ENCODE measurements at regions of chr1 and their contacts with region 1.

Region 1: GRCh38 chr1:111448918-111449702 is at the starts of genes ATP5PB and WDR77:
- DNase-seq: peak; percentile 87 to 99 (median 94)

Region 2: DNA sequence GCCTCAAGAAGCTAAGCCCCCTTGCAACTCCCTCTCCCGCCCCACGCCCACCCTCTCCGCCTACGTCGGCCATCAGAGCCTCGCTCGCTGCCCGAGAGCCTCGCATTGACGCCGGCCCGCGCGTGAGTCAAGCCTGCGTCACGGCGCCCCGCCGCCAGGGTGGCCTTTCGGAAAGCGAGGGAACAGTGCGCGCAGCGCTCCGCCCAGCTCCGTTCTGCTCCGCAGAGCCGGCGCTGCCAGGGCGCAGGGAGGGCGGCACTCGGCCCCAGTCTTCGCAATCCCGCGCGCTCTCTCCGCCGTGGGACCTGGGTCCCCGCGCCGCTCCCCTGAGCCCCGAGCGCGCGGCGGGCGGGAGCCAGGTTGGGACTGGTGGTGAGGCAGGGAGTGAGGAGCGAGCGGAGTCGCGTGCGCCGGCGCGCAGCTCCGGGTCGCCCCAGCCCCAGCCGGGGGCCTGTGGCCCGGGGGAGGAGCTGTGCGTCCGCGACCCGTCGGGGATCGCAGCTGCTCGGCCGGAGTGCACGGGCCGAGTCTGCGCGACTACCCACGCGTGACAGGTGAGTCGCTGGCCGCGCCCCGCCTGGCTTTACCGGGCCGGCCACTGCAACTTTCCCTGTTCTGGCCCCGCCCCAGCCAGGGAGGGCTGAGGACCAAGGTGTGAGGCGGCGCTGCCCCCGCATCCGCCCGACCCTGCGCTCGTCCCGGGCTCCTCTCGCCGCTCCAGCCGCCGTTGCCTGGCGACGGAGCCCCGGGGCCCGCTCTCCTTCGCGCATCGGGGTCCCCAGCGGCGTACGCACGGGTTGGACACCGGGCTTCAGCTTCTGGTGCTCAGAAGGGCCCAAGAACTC is 1298.6 kb before region 1 on chr1 and contains the start of gene SLC6A17:
- intact Hi-C with region 1: no loop called
- DNase-seq: peak in 8 of 10 donors; percentile 70 to 97 (median 82)

Region 3: DNA sequence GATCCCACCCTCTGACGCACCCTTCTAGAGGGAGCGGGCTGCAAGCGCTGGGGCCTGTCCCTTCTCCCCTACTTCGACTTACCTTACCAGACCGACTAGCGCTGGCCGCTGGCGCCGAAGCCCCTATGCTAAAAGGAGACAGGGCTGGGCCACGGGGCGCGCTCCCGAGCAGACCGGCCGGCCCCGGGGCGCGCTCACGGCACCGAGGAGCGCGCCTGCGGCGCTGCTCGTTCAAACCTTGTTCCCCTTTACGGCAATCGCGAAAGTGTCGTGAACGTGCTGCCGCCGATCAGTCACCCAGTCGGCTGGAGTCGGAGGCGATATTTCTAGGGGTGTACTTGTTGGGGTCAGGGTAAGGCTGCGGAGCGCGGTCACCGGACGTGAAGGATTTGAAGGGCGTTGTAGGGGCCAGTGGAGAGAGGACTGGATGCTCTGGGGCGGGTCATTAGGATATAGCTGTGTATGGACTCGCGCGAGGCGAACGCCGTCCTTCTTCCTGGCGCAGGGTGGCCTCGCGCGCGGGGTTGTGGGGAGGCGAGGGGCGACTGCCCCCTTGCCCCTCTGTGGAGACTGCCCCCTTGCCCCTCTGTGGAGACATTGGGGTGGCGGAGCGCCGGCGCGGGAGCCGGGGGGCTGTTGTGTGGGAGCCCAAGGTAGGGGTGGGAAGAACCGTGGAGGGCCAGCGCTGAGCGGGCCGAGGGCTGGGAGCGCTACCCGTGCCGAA is 309.0 kb before region 1 on chr1 and contains the starts of genes CEPT1 and DRAM2:
- intact Hi-C with region 1: loop called (anchors 2 kb)
- DNase-seq: peak; percentile 85 to 98 (median 94)